Activated naive CD8-positive, alpha-beta T cell treated with anti-CD3 and anti-CD28 coated beads, Interleukin-2, amount 10 ng/mL, durations not matched to agents 7 days and 5 days (primary cell): ENCODE measurements at regions of chrX and their contacts with region 1.

Region 1: GRCh38 chrX:49257846-49258748 is 6.4 kb downstream of the FOXP3 start:
- DNase-seq: no peak
- ATAC-seq: peak; percentile 51
- H3K4me3 Mint-ChIP-seq: peak overlapping the region; percentile 42
- H3K27ac Mint-ChIP-seq: peak overlapping the region; percentile 60
- H3K4me1 Mint-ChIP-seq: peaks cover 19% of the 10 kb centered on the region
- H3K27me3 Mint-ChIP-seq: no peaks in the 10 kb centered on the region

Region 2: DNA sequence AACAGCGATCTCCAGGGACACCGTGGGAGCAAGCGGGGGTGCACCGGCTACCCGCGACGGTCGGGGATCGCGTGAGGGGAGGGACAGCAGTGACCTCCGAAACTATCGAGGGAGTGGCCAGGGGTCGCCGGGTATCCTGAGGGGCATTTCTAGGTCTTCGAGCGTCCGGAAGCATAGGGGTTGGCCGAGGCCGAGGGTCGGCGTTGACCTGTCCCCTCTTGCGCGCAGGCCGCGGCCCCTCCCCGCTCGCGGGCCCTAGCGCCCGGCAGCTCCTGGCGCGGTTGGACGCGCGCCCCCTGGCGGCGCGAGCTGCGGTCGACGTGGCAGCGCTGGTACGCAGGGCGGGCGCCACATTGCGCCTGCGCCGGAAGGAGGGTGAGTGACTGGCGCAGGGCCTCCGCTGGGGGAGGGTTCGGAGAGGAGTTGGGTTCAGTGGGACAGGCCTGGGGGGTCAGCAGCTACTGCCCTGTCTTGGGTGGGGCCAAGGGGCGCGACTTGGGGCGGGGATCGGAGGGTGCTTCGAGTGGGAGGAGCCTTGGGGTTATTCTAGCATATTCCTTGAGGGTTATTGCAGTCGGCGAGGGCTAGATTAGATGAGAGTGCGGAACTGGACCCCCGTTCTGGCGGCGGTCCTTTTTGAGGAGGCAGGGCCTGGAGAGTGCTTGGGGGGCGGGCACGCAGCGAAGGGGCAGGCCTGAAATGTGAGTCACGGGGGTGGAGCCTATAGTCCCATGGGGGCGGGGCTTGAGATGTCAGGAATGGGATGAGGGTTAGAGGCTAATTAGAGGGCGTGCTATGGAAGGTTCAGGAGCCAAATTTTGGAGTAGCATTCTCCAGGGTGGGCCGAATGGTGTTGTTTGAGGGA is 94.3 kb before region 1 on chrX:
- POLR2A ChIA-PET with region 1: no interaction called
- DNase-seq: peak; percentile 88
- ATAC-seq: peak; percentile 61
- H3K4me3 Mint-ChIP-seq: peak overlapping the region; percentile 88
- H3K27ac Mint-ChIP-seq: peak overlapping the region; percentile 97
- H3K4me1 Mint-ChIP-seq: peaks cover 28% of the 10 kb centered on the region
- H3K27me3 Mint-ChIP-seq: no peaks in the 10 kb centered on the region

Region 3: GRCh38 chrX:49269010-49269767 is 11.1 kb after region 1 on chrX:
- POLR2A ChIA-PET with region 1: interaction called, 14 read pairs
- DNase-seq: peak; percentile 84
- ATAC-seq: peak; percentile 82
- H3K4me3 Mint-ChIP-seq: peak overlapping the region; percentile 92
- H3K27ac Mint-ChIP-seq: peak overlapping the region; percentile 96
- H3K4me1 Mint-ChIP-seq: peaks cover 33% of the 10 kb centered on the region
- H3K27me3 Mint-ChIP-seq: no peaks in the 10 kb centered on the region